MCF 10A (cell line): ENCODE measurements at regions of chr1 and their contacts with region 1.

Region 1: GRCh38 chr1:204207136-204207616 is 6.6 kb downstream of the GOLT1A start:
- DNase-seq: peak; percentile 76
- H3K4me3 Mint-ChIP-seq: no peak overlapping the region
- H3K27ac Mint-ChIP-seq: no peak overlapping the region
- H3K4me1 Mint-ChIP-seq: no peaks in the 10 kb centered on the region
- H3K27me3 Mint-ChIP-seq: peaks cover 38% of the 10 kb centered on the region
- CTCF ChIP-seq: peak; percentile 99

Region 2: GRCh38 chr1:203871107-203871875 is 335.9 kb before region 1 on chr1:
- CTCF ChIA-PET with region 1: interaction called, 22 read pairs
- POLR2A ChIA-PET with region 1: no interaction called
- intact Hi-C with region 1: no loop called
- DNase-seq: peak; percentile 86
- H3K4me3 Mint-ChIP-seq: no peak overlapping the region
- H3K27ac Mint-ChIP-seq: peak overlapping the region; percentile 74
- H3K4me1 Mint-ChIP-seq: peaks cover 3% of the 10 kb centered on the region
- H3K27me3 Mint-ChIP-seq: no peaks in the 10 kb centered on the region
- CTCF ChIP-seq: peak; percentile 100

Region 3: GRCh38 chr1:204190212-204191211 is 16.7 kb before region 1 on chr1:
- CTCF ChIA-PET with region 1: interaction called, 60 read pairs
- POLR2A ChIA-PET with region 1: interaction called, 5 read pairs
- intact Hi-C with region 1: no loop called
- DNase-seq: no peak
- H3K4me3 Mint-ChIP-seq: no peak overlapping the region
- H3K27ac Mint-ChIP-seq: no peak overlapping the region
- H3K4me1 Mint-ChIP-seq: no peaks in the 10 kb centered on the region
- H3K27me3 Mint-ChIP-seq: peaks cover 66% of the 10 kb centered on the region
- CTCF ChIP-seq: no peak

Region 4: DNA sequence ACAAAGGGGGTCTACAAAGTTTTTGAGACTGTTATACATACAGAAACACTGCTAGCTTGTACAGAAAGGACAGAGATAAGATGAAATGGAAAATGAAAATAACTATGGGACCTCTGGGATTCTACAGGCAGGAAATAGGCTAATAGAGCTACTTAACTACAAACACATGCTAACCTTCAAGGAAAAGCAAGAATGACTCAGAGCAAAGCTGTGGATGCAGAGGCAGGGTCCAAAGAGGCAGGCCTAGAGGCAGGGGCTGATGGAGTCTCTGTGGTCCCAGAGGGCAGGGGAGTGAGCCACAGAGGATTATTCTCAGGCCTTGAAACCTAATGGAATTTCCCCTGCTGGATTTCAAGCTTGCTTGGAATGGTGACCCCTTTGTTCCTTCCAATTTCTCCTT is 25.4 kb after region 1 on chr1:
- CTCF ChIA-PET with region 1: interaction called, 60 read pairs
- POLR2A ChIA-PET with region 1: no interaction called
- intact Hi-C with region 1: no loop called
- DNase-seq: no peak
- H3K4me3 Mint-ChIP-seq: no peak overlapping the region
- H3K27ac Mint-ChIP-seq: no peak overlapping the region
- H3K4me1 Mint-ChIP-seq: peaks cover 3% of the 10 kb centered on the region
- H3K27me3 Mint-ChIP-seq: no peaks in the 10 kb centered on the region
- CTCF ChIP-seq: no peak

Region 5: GRCh38 chr1:204286831-204287421 is 79.8 kb after region 1 on chr1:
- CTCF ChIA-PET with region 1: interaction called, 15 read pairs
- POLR2A ChIA-PET with region 1: interaction called, 4 read pairs
- intact Hi-C with region 1: no loop called
- DNase-seq: peak; percentile 67
- H3K4me3 Mint-ChIP-seq: peak overlapping the region; percentile 89
- H3K27ac Mint-ChIP-seq: peak overlapping the region; percentile 88
- H3K4me1 Mint-ChIP-seq: peaks cover 74% of the 10 kb centered on the region
- H3K27me3 Mint-ChIP-seq: no peaks in the 10 kb centered on the region
- CTCF ChIP-seq: peak; percentile 14

Region 6: DNA sequence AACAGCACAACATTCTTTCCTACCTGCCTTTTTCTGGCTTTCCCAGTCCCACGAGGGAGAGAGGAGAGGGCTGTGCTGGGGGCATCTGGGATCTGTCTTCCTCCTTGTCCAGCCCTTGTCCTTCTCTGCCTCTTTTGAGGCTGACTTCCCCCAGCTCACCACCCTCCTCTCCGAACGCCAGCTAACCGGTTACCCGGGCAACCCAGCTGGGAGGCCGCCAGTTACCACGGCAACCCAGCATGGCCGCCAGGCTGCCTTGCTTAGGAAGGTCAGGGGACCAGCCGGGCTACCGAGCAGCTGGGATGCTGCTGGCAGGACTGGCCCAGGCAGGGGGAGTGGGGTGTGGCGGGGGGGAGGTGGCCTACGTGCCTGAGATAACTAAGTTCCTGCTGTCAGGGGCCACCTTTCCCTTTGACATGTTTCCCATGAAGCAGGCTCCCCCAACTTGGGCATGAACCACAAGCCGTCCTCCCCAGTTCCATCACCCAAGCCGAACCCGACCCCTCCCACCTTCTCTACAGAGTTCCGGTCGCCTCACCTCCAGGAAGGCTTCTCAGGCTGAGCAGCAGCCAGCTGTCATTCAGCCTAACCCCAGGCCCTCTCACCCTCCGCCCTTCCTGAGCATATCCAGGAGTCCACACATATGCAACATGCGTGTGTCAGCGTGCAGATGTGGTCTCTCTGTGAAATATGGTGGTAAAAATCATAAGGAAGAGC is 143.8 kb after region 1 on chr1:
- CTCF ChIA-PET with region 1: interaction called, 13 read pairs
- POLR2A ChIA-PET with region 1: no interaction called
- intact Hi-C with region 1: no loop called
- DNase-seq: no peak
- H3K4me3 Mint-ChIP-seq: no peak overlapping the region
- H3K27ac Mint-ChIP-seq: no peak overlapping the region
- H3K4me1 Mint-ChIP-seq: no peaks in the 10 kb centered on the region
- H3K27me3 Mint-ChIP-seq: no peaks in the 10 kb centered on the region
- CTCF ChIP-seq: no peak